ENCODE measurements at regions of chr1 and their contacts with region 1.

Region 1: GRCh38 chr1:20493839-20494608 is 8.0 kb upstream of the CAMK2N1 start:
- DNase-seq: peak; percentile 87
- H3K4me3 Mint-ChIP-seq: no peak overlapping the region
- H3K27ac Mint-ChIP-seq: no peak overlapping the region
- H3K4me1 Mint-ChIP-seq: peaks cover 29% of the 10 kb centered on the region
- H3K27me3 Mint-ChIP-seq: no peaks in the 10 kb centered on the region

Region 2: DNA sequence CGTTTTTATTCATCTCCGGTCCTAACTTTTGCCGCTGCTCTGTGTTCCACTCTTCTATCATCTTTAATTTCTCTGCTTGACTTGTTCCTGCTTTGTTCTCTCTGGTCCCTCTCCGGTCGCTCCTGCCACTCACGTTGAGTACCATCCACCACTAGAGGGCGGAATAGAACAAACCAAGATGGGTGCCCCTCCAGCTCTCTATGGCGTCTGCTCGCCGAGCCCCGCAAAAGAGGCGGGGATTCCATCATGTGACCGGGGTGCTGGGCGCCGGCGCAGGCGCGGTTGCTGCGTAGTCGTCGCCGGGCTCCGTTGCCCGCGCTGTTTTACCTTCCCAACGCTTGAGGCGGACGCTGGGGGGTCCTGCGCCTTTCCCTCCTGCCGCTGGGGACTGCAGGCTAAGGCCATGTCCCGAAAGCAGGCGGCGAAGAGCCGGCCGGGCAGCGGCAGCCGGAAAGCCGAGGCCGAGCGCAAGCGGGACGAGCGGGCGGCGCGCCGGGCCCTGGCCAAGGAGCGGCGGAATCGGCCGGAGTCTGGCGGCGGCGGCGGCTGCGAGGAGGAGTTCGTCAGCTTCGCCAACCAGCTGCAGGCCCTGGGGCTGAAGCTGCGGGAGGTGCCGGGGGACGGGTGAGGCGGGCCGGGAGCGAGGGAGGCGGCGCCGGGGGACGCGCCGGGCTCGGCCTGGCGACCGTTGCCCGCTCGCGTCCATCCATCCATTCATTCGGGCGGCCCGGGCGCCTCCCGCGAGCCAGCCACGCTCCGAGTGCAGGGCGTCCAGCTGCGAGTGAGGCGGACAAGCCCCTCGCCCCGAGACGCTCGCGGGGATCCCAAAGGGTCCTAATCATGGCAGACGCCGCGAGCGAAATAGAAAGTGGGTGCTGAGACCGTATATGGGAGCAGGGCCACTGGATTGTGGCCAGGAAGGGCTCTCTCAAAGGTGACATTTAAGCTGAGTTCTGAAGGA is 611.6 kb before region 1 on chr1 and contains the start of gene OTUD3:
- CTCF ChIA-PET with region 1: no interaction called
- POLR2A ChIA-PET with region 1: no interaction called
- intact Hi-C with region 1: loop called (anchors 10 kb)
- DNase-seq: peak; percentile 97
- H3K4me3 Mint-ChIP-seq: peak within 1 kb of the TSS; percentile 84
- H3K27ac Mint-ChIP-seq: peak within 1 kb of the TSS; percentile 14
- H3K4me1 Mint-ChIP-seq: peaks cover 37% of the 10 kb centered on the region
- H3K27me3 Mint-ChIP-seq: peaks cover 7% of the 10 kb centered on the region
- total RNA-seq, gene OTUD3: 6.9 to 8.4 TPM

Region 3: GRCh38 chr1:20212685-20213331 is 281.2 kb before region 1 on chr1:
- CTCF ChIA-PET with region 1: interaction called, 163 read pairs
- POLR2A ChIA-PET with region 1: no interaction called
- intact Hi-C with region 1: loop called (anchors 1 kb)
- DNase-seq: peak; percentile 66
- H3K4me3 Mint-ChIP-seq: no peak overlapping the region
- H3K27ac Mint-ChIP-seq: no peak overlapping the region
- H3K4me1 Mint-ChIP-seq: peaks cover 6% of the 10 kb centered on the region
- H3K27me3 Mint-ChIP-seq: peaks cover 39% of the 10 kb centered on the region

Region 4: DNA sequence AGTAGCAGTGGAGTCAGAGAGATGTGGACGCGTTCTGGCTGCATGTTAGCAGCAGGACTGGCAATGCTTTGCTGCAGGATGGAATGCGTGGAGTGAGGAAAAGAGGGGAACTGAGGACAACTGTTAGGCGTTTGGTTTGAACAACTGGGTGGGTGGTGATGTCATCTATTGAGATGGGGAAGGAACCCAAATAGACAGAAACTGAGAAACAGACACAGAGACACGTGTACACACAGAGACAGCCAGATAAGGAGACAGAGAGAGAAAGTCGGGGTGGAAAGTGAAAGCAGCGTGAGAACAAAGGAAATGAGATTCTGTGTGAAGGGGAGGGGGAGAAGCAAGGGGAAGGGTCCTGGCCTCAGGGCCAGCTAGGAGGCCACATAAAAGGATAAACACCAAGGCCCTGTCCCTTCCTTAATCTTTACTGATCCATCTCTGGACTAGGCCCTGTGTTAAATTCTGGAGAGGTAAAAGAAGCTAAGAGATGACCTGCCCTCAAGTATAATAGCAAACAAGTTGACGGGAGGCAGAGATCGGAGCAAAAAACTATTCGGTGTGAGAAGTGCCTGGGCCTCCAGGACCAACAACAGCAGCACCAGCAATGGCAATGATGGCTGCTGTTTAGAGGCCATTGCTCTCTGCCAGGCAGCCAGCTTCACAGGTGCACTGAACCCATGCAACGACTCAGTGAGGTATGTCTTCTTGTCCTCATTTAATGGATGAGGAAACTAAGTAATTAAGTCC is 171.8 kb before region 1 on chr1:
- CTCF ChIA-PET with region 1: no interaction called
- POLR2A ChIA-PET with region 1: no interaction called
- intact Hi-C with region 1: loop called (anchors 5 kb)
- DNase-seq: peak; percentile 52
- H3K4me3 Mint-ChIP-seq: peak overlapping the region; percentile 53
- H3K27ac Mint-ChIP-seq: peak overlapping the region; percentile 81
- H3K4me1 Mint-ChIP-seq: peaks cover 33% of the 10 kb centered on the region
- H3K27me3 Mint-ChIP-seq: peaks cover 16% of the 10 kb centered on the region

Region 5: GRCh38 chr1:20376880-20377494 is 117.0 kb before region 1 on chr1:
- CTCF ChIA-PET with region 1: interaction called, 62 read pairs
- POLR2A ChIA-PET with region 1: no interaction called
- intact Hi-C with region 1: loop called (anchors 1 kb)
- DNase-seq: peak; percentile 77
- H3K4me3 Mint-ChIP-seq: no peak overlapping the region
- H3K27ac Mint-ChIP-seq: no peak overlapping the region
- H3K4me1 Mint-ChIP-seq: peaks cover 3% of the 10 kb centered on the region
- H3K27me3 Mint-ChIP-seq: peaks cover 17% of the 10 kb centered on the region

Region 6: GRCh38 chr1:20483833-20484518 is 10.0 kb before region 1 on chr1:
- CTCF ChIA-PET with region 1: interaction called, 14 read pairs
- POLR2A ChIA-PET with region 1: no interaction called
- intact Hi-C with region 1: no loop called
- DNase-seq: no peak
- H3K4me3 Mint-ChIP-seq: peak overlapping the region; percentile 65
- H3K27ac Mint-ChIP-seq: no peak overlapping the region
- H3K4me1 Mint-ChIP-seq: peaks cover 14% of the 10 kb centered on the region
- H3K27me3 Mint-ChIP-seq: peaks cover 59% of the 10 kb centered on the region

Region 7: GRCh38 chr1:20686878-20687615 is 193.0 kb after region 1 on chr1:
- CTCF ChIA-PET with region 1: no interaction called
- POLR2A ChIA-PET with region 1: no interaction called
- intact Hi-C with region 1: no loop called
- DNase-seq: no peak
- H3K4me3 Mint-ChIP-seq: no peak overlapping the region
- H3K27ac Mint-ChIP-seq: no peak overlapping the region
- H3K4me1 Mint-ChIP-seq: no peaks in the 10 kb centered on the region
- H3K27me3 Mint-ChIP-seq: peaks cover 2% of the 10 kb centered on the region